Activated B cell treated with CpG ODN at 0.5 μM for 24 hours (primary cell): ENCODE measurements at regions of chr2 and their contacts with region 1.

Region 1: DNA sequence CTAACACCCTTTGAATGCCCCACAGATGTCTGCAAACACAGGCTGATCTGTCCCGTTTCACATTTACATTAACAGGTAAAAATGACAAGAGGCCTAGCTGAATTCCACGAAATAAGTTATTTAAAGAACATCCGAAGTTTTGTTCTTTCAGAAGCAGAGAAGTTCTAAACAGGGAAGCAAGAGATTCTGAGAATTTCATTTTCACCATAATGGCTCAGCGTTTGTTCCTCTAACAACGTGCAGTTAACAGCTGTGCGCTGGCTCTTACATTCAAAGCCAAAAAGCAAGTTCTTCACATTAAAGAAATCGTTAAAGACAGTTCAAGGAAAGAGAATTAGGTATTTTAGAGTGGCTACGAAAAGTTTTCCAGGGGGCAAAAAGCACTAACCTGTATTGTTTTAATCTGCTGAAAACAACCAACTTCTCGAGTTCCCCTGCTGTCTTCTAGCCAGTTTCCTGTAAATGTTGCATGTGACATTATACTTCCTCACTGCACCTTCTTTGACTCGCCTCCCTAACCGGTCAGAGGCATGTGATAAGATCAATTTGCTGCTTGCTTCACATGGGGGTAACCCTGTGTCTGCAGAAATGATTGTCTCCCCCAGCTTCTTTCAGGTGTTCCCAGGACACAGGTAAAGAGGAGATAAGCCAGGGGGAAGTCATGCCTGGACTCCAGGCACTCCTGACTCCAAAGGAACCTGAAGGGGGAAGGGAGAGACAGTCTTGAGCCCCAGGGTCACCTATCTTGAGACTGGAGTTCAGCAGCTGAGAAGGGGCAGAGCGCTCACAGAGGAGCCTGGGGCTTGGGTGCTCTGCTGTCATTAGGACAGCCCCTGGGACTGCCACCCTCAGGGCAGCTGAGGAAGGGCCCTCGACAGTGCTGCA is 36.8 kb upstream of the WIPF1 start:
- DNase-seq: peak; percentile 29
- ATAC-seq: peak; percentile 77
- H3K4me3 Mint-ChIP-seq: peak overlapping the region; percentile 95
- H3K27ac Mint-ChIP-seq: peak overlapping the region; percentile 98
- H3K4me1 Mint-ChIP-seq: peaks cover 58% of the 10 kb centered on the region
- H3K27me3 Mint-ChIP-seq: no peaks in the 10 kb centered on the region
- CTCF ChIP-seq: no peak

Region 2: GRCh38 chr2:174593574-174594203 is 40.7 kb before region 1 on chr2:
- CTCF ChIA-PET with region 1: interaction called, 9 read pairs
- POLR2A ChIA-PET with region 1: interaction called, 123 read pairs
- intact Hi-C with region 1: no loop called
- DNase-seq: no peak
- ATAC-seq: peak; percentile 65
- H3K4me3 Mint-ChIP-seq: peak overlapping the region; percentile 98
- H3K27ac Mint-ChIP-seq: peak overlapping the region; percentile 99
- H3K4me1 Mint-ChIP-seq: peaks cover 78% of the 10 kb centered on the region
- H3K27me3 Mint-ChIP-seq: no peaks in the 10 kb centered on the region
- CTCF ChIP-seq: no peak

Region 3: GRCh38 chr2:174603280-174603679 is 31.1 kb before region 1 on chr2:
- CTCF ChIA-PET with region 1: interaction called, 6 read pairs
- POLR2A ChIA-PET with region 1: interaction called, 123 read pairs
- intact Hi-C with region 1: loop called (anchors 1 kb)
- DNase-seq: no peak
- ATAC-seq: peak; percentile 25
- H3K4me3 Mint-ChIP-seq: no peak overlapping the region
- H3K27ac Mint-ChIP-seq: peak overlapping the region; percentile 68
- H3K4me1 Mint-ChIP-seq: peaks cover 82% of the 10 kb centered on the region
- H3K27me3 Mint-ChIP-seq: no peaks in the 10 kb centered on the region
- CTCF ChIP-seq: no peak

Region 4: GRCh38 chr2:174615871-174616436 is 18.4 kb before region 1 on chr2:
- CTCF ChIA-PET with region 1: interaction called, 7 read pairs
- POLR2A ChIA-PET with region 1: interaction called, 62 read pairs
- intact Hi-C with region 1: loop called (anchors 1 kb)
- DNase-seq: no peak
- ATAC-seq: peak; percentile 18
- H3K4me3 Mint-ChIP-seq: peak overlapping the region; percentile 63
- H3K27ac Mint-ChIP-seq: peak overlapping the region; percentile 83
- H3K4me1 Mint-ChIP-seq: peaks cover 83% of the 10 kb centered on the region
- H3K27me3 Mint-ChIP-seq: no peaks in the 10 kb centered on the region
- CTCF ChIP-seq: no peak

Region 5: GRCh38 chr2:174623690-174624089 is 10.7 kb before region 1 on chr2:
- CTCF ChIA-PET with region 1: interaction called, 4 read pairs
- POLR2A ChIA-PET with region 1: interaction called, 24 read pairs
- intact Hi-C with region 1: loop called (anchors 1 kb)
- DNase-seq: no peak
- ATAC-seq: no peak
- H3K4me3 Mint-ChIP-seq: peak overlapping the region; percentile 9
- H3K27ac Mint-ChIP-seq: peak overlapping the region; percentile 80
- H3K4me1 Mint-ChIP-seq: peaks cover 81% of the 10 kb centered on the region
- H3K27me3 Mint-ChIP-seq: no peaks in the 10 kb centered on the region
- CTCF ChIP-seq: no peak

Region 6: DNA sequence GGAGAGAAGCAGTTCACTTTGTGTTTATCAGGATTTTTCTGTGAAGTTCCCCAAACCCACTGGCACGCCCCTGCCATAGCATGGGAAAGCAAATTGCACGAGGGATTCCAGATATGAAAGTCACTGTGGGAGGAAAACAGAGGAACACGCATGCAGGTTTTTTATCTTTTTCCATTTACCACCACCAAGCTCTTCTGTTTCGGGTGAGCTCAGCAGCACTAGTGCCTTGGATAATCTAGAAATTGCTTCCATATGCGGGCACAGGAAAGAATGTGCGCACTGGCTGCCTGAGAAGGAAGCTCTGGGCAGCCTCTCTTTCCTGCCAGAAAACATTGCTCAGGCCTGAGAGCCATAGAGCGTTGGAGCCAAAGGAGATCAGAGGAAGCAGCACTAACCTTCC is 29.2 kb after region 1 on chr2:
- CTCF ChIA-PET with region 1: no interaction called
- POLR2A ChIA-PET with region 1: interaction called, 3 read pairs
- intact Hi-C with region 1: loop called (anchors 2 kb)
- DNase-seq: no peak
- ATAC-seq: no peak
- H3K4me3 Mint-ChIP-seq: no peak overlapping the region
- H3K27ac Mint-ChIP-seq: no peak overlapping the region
- H3K4me1 Mint-ChIP-seq: peaks cover 25% of the 10 kb centered on the region
- H3K27me3 Mint-ChIP-seq: no peaks in the 10 kb centered on the region
- CTCF ChIP-seq: no peak

Region 7: GRCh38 chr2:174682578-174683391 is 48.4 kb after region 1 on chr2:
- CTCF ChIA-PET with region 1: interaction called, 7 read pairs
- POLR2A ChIA-PET with region 1: interaction called, 7 read pairs
- intact Hi-C with region 1: loop called (anchors 1 kb)
- DNase-seq: peak; percentile 63
- ATAC-seq: peak; percentile 74
- H3K4me3 Mint-ChIP-seq: peak overlapping the region; percentile 90
- H3K27ac Mint-ChIP-seq: peak overlapping the region; percentile 83
- H3K4me1 Mint-ChIP-seq: peaks cover 16% of the 10 kb centered on the region
- H3K27me3 Mint-ChIP-seq: no peaks in the 10 kb centered on the region
- CTCF ChIP-seq: no peak

Region 8: DNA sequence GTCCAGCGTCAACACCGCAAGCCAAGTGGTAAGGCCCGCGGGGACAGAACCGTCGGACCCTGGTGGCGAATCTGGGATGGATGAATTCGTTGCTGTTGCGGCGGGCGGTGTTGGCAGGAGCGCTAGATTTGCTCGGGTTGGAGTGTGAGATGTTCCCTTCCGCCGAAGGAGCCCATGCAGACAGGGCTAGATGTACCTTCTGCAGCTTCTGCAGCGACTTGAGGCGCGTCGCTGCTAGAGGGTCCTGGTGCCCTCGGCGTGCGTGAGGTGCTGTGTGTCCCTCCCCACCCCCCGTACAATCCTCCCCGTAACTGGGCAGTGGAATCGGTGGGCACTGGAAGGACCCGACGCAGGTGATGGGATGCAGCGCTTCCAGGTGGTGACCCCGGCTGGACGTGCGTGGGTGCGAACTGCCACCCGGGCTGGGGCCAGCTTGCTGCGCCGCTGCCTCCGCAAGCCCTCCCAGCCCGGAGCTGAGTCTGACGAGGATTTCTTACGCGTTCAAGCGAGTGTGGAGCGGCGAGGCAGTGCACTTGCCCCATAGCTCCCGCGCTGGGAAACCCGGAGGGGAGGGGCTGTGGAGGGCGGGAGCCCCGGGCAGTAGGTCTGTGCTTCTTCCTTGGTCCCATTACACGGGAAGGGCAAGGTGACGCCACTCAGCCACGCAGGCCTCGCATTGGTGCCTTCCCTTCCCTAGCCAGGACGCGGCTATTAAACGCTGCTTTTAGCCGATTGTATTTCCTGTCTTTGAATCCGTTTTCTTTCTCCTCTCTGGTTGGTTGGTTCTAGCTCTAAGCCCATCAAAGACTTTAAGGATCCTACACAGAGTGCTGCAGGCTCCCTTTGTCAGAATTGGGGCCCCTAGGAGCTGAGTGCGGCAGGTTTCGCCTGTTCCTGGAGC is 95.7 kb after region 1 on chr2:
- CTCF ChIA-PET with region 1: no interaction called
- POLR2A ChIA-PET with region 1: no interaction called
- intact Hi-C with region 1: no loop called
- DNase-seq: peak; percentile 22
- ATAC-seq: peak; percentile 34
- H3K4me3 Mint-ChIP-seq: peak overlapping the region; percentile 80
- H3K27ac Mint-ChIP-seq: no peak overlapping the region
- H3K4me1 Mint-ChIP-seq: peaks cover 10% of the 10 kb centered on the region
- H3K27me3 Mint-ChIP-seq: peaks cover 47% of the 10 kb centered on the region
- CTCF ChIP-seq: no peak